ENCODE measurements at regions of chr6 and their contacts with region 1.

Region 1: GRCh38 chr6:99416892-99417767 is 8.0 kb downstream of the PNISR start:
- DNase-seq: peak; percentile 38
- ATAC-seq: peak; percentile 86
- H3K4me3 ChIP-seq: peak overlapping the region; percentile 44; the same call in 1 of the 2 replicates
- H3K27ac ChIP-seq: peak overlapping the region; percentile 10
- H3K4me1 ChIP-seq: peaks cover 11% of the 10 kb centered on the region
- H3K27me3 ChIP-seq: no peaks in the 10 kb centered on the region
- CTCF ChIP-seq: no peak
- EP300 ChIP-seq: no peak
- POLR2A ChIP-seq: no peak
- RAD21 ChIP-seq: no peak

Region 2: GRCh38 chr6:99393698-99394531 is 23.2 kb before region 1 on chr6 and contains the start of gene COQ3:
- CTCF ChIA-PET with region 1: interaction called, 3 read pairs
- POLR2A ChIA-PET with region 1: interaction called, 4 read pairs
- RAD21 ChIA-PET with region 1: interaction called, 5 read pairs
- SMC1A ChIA-PET with region 1: interaction called, 21 read pairs
- in situ Hi-C with region 1: no loop called
- intact Hi-C with region 1: no loop called
- DNase-seq: peak; percentile 33
- ATAC-seq: peak; percentile 90
- H3K4me3 ChIP-seq: peak within 1 kb of the TSS; percentile 80
- H3K27ac ChIP-seq: peak within 1 kb of the TSS; percentile 71
- H3K4me1 ChIP-seq: no peaks in the 10 kb centered on the region
- H3K27me3 ChIP-seq: no peaks in the 10 kb centered on the region
- CTCF ChIP-seq: no peak
- EP300 ChIP-seq: no peak
- POLR2A ChIP-seq: peak; percentile 71
- RAD21 ChIP-seq: 0 out of 2 replicates have a peak, but pooled peaks have one; percentile 9
- polyA plus RNA-seq, gene COQ3: 43.3 to 50.6 TPM

Region 3: DNA sequence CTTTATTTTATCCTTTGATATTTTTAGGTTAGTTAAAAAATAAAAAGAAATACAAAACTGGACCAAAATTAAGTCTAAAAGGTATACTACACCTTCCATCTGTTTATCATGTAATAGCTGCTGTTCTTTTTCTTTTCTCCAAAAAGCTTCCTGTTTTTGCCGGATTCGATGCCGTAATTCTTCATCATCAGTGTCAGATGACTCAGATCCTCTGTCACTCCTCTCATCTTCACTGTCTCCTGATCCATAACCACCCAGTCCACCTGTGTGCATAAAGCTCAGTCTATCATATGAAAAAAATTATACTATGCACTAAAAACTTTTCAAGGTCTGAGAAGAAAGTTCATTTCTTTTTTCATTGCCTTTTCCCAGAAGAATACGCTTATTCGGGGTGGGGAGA is 14.7 kb before region 1 on chr6:
- CTCF ChIA-PET with region 1: interaction called, 7 read pairs
- POLR2A ChIA-PET with region 1: interaction called, 3 read pairs
- RAD21 ChIA-PET with region 1: no interaction called
- SMC1A ChIA-PET with region 1: interaction called, 9 read pairs
- in situ Hi-C with region 1: no loop called
- intact Hi-C with region 1: loop called (anchors 2 kb)
- DNase-seq: no peak
- ATAC-seq: no peak
- H3K4me3 ChIP-seq: no peak overlapping the region
- H3K27ac ChIP-seq: no peak overlapping the region
- H3K4me1 ChIP-seq: no peaks in the 10 kb centered on the region
- H3K27me3 ChIP-seq: no peaks in the 10 kb centered on the region
- CTCF ChIP-seq: no peak
- EP300 ChIP-seq: no peak
- POLR2A ChIP-seq: no peak
- RAD21 ChIP-seq: no peak

Measured in GM12878 (cell line).